A549 (cell line): ENCODE measurements at regions of chr10 and their contacts with region 1.

Region 1: GRCh38 chr10:132458593-132459300 is 61.7 kb downstream of the PWWP2B start:
- DNase-seq: peak in 1 of 2 experiments; percentile 61
- ATAC-seq: peak; percentile 63 to 88
- H3K4me3 ChIP-seq: no peak overlapping the region; the same call in 2 of the 3 replicates
- H3K27ac ChIP-seq: no peak overlapping the region
- H3K4me1 ChIP-seq: peaks cover 22% of the 10 kb centered on the region
- CTCF ChIP-seq: peak; percentile 90
- EP300 ChIP-seq: no peak
- POLR2A ChIP-seq: no peak
- RAD21 ChIP-seq: peak; percentile 93 to 98

Region 2: GRCh38 chr10:132508581-132509428 is 50.1 kb after region 1 on chr10:
- CTCF ChIA-PET with region 1: interaction called, 10 read pairs
- POLR2A ChIA-PET with region 1: no interaction called
- DNase-seq: peak in 1 of 2 experiments; percentile 22
- ATAC-seq: peak; percentile 25 to 55; a peak in 3 of 6 replicates
- H3K4me3 ChIP-seq: no peak overlapping the region
- H3K27ac ChIP-seq: no peak overlapping the region
- H3K4me1 ChIP-seq: no peaks in the 10 kb centered on the region
- CTCF ChIP-seq: no peak
- EP300 ChIP-seq: no peak
- POLR2A ChIP-seq: no peak
- RAD21 ChIP-seq: peak in 1 of 2 experiments; percentile 11; a peak in 1 of 5 replicates

Region 3: GRCh38 chr10:132571650-132572535 is 113.1 kb after region 1 on chr10:
- CTCF ChIA-PET with region 1: interaction called, 133 read pairs
- POLR2A ChIA-PET with region 1: no interaction called
- DNase-seq: peak; percentile 74 to 75
- ATAC-seq: peak; percentile 87 to 92
- H3K4me3 ChIP-seq: no peak overlapping the region
- H3K27ac ChIP-seq: peak overlapping the region; percentile 11 to 59; a peak in 4 of 6 replicates
- H3K4me1 ChIP-seq: peaks cover 42% of the 10 kb centered on the region
- CTCF ChIP-seq: no peak
- EP300 ChIP-seq: no peak
- POLR2A ChIP-seq: no peak
- RAD21 ChIP-seq: no peak

Region 4: DNA sequence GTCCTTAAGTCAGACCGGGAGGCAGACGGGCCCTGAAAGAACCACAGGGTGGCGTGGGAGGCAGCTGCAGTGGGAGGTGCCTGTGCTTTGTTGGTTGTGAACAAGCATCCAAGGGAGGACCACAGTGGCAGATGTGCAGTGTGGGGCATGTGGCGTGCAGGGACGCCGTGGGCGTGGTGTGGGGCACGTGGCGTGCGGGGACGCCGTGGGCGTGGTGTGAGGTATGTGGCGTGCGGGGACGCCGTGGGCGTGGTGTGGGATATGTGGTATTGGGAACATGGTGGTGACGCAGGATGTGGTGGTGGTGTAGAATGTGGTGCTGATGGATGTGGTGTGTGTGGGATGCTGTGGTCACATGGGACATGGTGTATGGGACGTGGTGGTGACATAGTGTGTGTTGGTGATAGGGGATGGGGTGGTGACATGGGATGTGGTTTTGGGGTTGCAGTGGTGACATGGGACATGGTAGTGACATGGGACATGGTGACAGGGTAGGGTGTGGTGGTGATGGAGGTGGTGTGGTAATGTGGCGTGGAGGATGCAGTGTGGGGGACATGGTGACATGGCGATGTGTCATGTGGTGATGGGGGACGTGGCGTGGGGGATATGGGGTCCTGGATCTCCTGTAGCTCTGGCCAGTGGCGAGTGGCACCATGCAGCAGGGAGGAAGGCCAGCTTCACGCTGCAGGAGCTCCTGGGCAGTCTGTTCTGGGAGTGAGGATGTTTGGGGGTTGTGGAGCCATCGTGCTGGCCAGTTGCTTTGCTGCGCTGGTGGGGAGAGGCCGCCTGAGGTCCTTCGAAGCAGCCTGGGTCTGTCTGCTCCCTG is 157.6 kb after region 1 on chr10:
- CTCF ChIA-PET with region 1: interaction called, 11 read pairs
- POLR2A ChIA-PET with region 1: no interaction called
- DNase-seq: no peak
- ATAC-seq: no peak
- H3K4me3 ChIP-seq: no peak overlapping the region
- H3K27ac ChIP-seq: no peak overlapping the region
- H3K4me1 ChIP-seq: no peaks in the 10 kb centered on the region
- CTCF ChIP-seq: no peak
- EP300 ChIP-seq: no peak
- POLR2A ChIP-seq: no peak
- RAD21 ChIP-seq: no peak